ENCODE measurements at regions of chr2 and their contacts with region 1.

Region 1: GRCh38 chr2:8408560-8409460 is 273.0 kb upstream of the ID2 start:
- DNase-seq: peak; percentile 99
- ATAC-seq: peak; percentile 90
- H3K4me3 ChIP-seq: no peak overlapping the region
- H3K27ac ChIP-seq: peak overlapping the region; percentile 80
- H3K4me1 ChIP-seq: peaks cover 32% of the 10 kb centered on the region
- H3K27me3 ChIP-seq: no peaks in the 10 kb centered on the region
- CTCF ChIP-seq: no peak
- EP300 ChIP-seq: peak; percentile 95 to 96
- POLR2A ChIP-seq: no peak
- RAD21 ChIP-seq: peak; percentile 29; the same call in 1 of the 2 replicates

Region 2: DNA sequence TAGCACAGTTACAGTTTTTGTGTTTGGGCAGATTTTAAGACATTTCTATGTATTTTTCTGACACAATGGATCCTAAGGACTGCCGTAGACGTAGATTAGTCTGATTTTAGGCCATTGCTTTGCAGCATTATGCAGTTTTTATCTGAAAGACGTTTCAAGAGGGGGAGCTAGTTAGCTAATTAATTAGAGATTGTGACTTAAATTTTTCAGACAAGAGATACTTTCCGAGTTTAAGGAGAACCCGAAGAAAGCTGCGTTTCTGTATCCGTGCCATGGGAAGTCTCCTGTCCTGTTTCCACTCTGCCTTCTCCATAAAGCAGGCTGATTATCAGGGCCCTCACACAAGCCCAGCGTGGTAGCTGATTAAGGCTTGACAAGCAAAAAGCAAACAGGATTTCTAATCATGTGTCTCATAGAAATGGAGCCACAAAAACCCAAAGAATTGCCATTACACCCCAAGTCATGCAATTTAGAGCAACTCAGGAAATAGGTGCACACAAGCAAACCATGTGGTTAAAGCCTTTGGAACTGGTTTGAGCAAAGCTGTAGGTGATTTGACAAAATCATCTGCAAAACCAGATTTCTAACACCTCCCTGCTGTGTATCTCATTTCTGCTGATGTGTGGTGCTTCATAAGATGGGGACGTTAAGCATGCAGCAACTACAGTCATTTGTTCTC is 683.5 kb before region 1 on chr2:
- CTCF ChIA-PET with region 1: interaction called, 4 read pairs
- POLR2A ChIA-PET with region 1: no interaction called
- RAD21 ChIA-PET with region 1: interaction called, 19 read pairs
- SMC1A ChIA-PET with region 1: interaction called, 5 read pairs
- in situ Hi-C with region 1: no loop called
- intact Hi-C with region 1: no loop called
- DNase-seq: peak; percentile 73
- ATAC-seq: peak; percentile 51
- H3K4me3 ChIP-seq: no peak overlapping the region
- H3K27ac ChIP-seq: no peak overlapping the region; the same call in 1 of the 2 replicates
- H3K4me1 ChIP-seq: peaks cover 4% of the 10 kb centered on the region; the same call in 1 of the 2 replicates
- H3K27me3 ChIP-seq: no peaks in the 10 kb centered on the region; a peak in 1 of 4 replicates
- CTCF ChIP-seq: peak in 1 of 3 experiments; percentile 24; a peak in 1 of 6 replicates
- EP300 ChIP-seq: peak; percentile 63 to 68; a peak in 2 of 4 replicates
- POLR2A ChIP-seq: no peak
- RAD21 ChIP-seq: peak; percentile 27; the same call in 1 of the 2 replicates

Region 3: DNA sequence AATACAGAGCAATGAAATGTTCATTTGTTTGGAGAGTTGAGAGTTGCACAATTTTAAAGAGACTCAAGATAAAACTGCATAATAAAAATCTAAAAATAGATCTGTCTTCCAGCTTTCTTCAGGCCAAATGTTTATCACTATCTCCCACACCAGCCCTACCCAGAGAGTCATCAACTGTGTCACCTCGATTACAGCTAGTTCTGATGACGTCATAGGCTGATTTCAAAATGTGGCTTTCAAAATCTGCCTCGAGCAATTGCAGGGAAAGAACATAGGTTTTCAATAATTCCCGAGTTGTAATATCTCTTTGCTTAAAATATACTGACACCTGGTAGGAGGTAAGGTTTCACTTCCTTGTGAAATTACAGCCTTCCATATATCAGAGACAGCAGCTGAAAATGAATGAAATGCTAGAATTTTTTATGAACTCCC is 404.5 kb before region 1 on chr2:
- CTCF ChIA-PET with region 1: no interaction called
- POLR2A ChIA-PET with region 1: no interaction called
- RAD21 ChIA-PET with region 1: interaction called, 3 read pairs
- SMC1A ChIA-PET with region 1: interaction called, 4 read pairs
- in situ Hi-C with region 1: no loop called
- intact Hi-C with region 1: loop called (anchors 1 kb)
- DNase-seq: no peak
- ATAC-seq: peak; percentile 46
- H3K4me3 ChIP-seq: no peak overlapping the region
- H3K27ac ChIP-seq: no peak overlapping the region
- H3K4me1 ChIP-seq: peaks cover 4% of the 10 kb centered on the region; the same call in 1 of the 2 replicates
- H3K27me3 ChIP-seq: no peaks in the 10 kb centered on the region
- CTCF ChIP-seq: no peak
- EP300 ChIP-seq: peak; percentile 69 to 79; a peak in 2 of 4 replicates
- POLR2A ChIP-seq: no peak
- RAD21 ChIP-seq: no peak

Region 4: DNA sequence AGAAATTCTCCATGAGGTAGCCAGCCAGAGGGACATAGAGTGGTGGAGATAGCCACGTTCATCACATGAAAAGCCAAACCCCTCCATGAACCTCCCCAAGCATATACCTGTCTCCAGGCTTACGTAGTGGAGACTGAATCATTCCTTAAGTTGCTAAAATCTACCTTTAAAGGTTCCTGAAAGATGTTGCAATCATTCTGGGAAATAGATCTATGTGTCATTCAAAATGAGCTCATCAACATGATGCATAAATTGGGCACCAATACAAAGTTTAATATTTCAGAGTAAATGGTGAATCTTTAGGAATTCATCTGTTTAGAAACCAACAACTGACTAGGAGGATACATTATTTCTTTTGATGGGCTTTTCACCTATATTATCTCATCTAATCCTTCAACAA is 89.6 kb before region 1 on chr2:
- CTCF ChIA-PET with region 1: interaction called, 18 read pairs
- POLR2A ChIA-PET with region 1: interaction called, 36 read pairs
- RAD21 ChIA-PET with region 1: interaction called, 138 read pairs
- SMC1A ChIA-PET with region 1: interaction called, 352 read pairs
- in situ Hi-C with region 1: no loop called
- intact Hi-C with region 1: no loop called
- DNase-seq: no peak
- ATAC-seq: no peak
- H3K4me3 ChIP-seq: no peak overlapping the region
- H3K27ac ChIP-seq: no peak overlapping the region
- H3K4me1 ChIP-seq: peaks cover 4% of the 10 kb centered on the region
- H3K27me3 ChIP-seq: no peaks in the 10 kb centered on the region
- CTCF ChIP-seq: no peak
- EP300 ChIP-seq: no peak
- POLR2A ChIP-seq: no peak
- RAD21 ChIP-seq: no peak

Region 5: DNA sequence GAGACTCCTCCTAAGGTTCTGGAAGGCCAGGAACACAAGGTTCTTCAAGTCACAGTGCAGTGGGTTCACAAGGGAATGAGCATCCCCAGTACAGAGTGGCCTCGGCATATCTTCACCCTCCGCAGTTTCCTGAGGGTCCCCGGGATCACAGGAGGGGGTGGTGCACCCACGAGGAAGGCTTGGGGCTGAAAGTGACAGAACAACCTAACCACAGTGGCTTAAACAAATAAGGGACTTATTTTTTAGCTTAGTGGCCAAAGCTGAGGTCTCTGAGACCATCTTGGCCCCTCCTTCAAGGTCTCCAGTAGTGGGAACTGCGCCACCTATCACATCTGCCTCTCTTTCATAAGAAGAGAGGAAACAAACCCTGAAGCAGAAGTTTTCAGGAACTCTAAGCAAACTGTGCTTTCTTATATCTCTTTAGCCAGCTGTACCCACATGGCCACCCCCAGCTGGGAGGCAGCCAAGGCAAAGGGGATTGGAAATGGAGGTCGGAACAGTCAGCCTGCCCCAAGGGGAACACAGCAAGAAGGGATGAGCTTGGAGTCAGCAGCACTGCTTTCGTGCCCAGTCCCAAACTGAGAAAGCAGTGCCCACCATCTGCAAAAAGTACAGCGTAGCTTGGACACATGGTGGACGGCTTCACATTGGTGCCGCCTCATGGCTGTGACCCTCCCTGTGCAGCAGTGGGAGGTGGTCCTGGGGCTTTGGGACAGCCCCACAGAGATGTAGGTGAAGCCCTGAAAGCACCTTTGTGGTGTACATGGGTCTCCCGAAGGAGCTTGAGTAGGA is 13.0 kb after region 1 on chr2:
- CTCF ChIA-PET with region 1: interaction called, 12 read pairs
- POLR2A ChIA-PET with region 1: interaction called, 70 read pairs
- RAD21 ChIA-PET with region 1: interaction called, 92 read pairs
- SMC1A ChIA-PET with region 1: interaction called, 98 read pairs
- in situ Hi-C with region 1: no loop called
- intact Hi-C with region 1: no loop called
- DNase-seq: peak; percentile 71
- ATAC-seq: peak; percentile 85
- H3K4me3 ChIP-seq: no peak overlapping the region
- H3K27ac ChIP-seq: peak overlapping the region; percentile 46
- H3K4me1 ChIP-seq: peaks cover 16% of the 10 kb centered on the region
- H3K27me3 ChIP-seq: no peaks in the 10 kb centered on the region
- CTCF ChIP-seq: peak; percentile 26 to 44 (median 29); a peak in 5 of 6 replicates
- EP300 ChIP-seq: peak; percentile 56 to 80; a peak in 3 of 4 replicates
- POLR2A ChIP-seq: no peak
- RAD21 ChIP-seq: peak; percentile 49

Region 6: DNA sequence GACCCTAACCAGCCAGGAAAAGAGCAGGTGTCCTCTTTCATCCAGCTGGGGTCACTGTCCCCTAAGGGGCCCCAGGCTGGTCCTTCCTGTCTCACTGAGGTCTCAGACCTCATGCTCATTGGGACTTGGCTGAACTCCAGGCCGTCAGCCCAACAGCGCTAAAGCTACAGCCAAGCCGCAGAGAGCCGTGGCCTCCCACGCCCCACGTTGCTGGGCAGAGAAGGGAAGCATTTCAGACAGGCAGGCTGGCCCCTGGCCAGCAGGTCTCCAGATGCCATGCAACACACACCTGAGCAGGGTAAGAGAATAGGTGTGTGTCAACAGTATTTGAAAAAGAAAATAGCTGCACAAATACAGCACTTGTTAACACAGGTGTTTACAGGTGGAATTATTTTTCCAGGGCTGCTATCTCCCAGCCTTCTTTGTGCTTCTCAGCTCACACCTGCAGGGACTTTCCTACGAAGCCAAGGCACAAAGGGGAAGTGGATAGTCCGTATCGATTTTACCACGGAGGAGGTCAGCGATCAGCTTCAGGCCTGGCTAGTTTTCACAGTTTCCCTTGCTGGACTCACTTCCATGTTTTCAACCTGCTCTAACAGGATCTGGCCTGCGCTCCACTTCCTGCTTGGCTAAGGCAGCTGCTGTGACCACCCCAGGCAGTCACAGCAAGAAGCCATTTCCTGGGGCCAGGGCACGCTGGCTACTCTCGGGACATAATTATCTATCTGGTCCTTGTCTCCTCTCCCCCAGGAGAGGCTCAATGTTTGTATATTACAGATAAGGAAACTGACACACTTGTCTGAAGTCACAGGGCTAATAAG is 117.0 kb after region 1 on chr2:
- CTCF ChIA-PET with region 1: interaction called, 3 read pairs
- POLR2A ChIA-PET with region 1: interaction called, 5 read pairs
- RAD21 ChIA-PET with region 1: interaction called, 21 read pairs
- SMC1A ChIA-PET with region 1: interaction called, 11 read pairs
- in situ Hi-C with region 1: no loop called
- intact Hi-C with region 1: loop called (anchors 2 kb)
- DNase-seq: peak; percentile 90
- ATAC-seq: peak; percentile 82
- H3K4me3 ChIP-seq: 0 out of 2 replicates have a peak overlapping the region, but pooled peaks have one; percentile 9
- H3K27ac ChIP-seq: peak overlapping the region; percentile 74
- H3K4me1 ChIP-seq: peaks cover 64% of the 10 kb centered on the region
- H3K27me3 ChIP-seq: no peaks in the 10 kb centered on the region
- CTCF ChIP-seq: peak; percentile 54 to 72 (median 58)
- EP300 ChIP-seq: peak in 1 of 2 experiments; percentile 80; a peak in 3 of 4 replicates
- POLR2A ChIP-seq: no peak
- RAD21 ChIP-seq: peak; percentile 88

Measured in GM12878 (cell line).